ENCODE measurements at regions of chr4 and their contacts with region 1.

Region 1: DNA sequence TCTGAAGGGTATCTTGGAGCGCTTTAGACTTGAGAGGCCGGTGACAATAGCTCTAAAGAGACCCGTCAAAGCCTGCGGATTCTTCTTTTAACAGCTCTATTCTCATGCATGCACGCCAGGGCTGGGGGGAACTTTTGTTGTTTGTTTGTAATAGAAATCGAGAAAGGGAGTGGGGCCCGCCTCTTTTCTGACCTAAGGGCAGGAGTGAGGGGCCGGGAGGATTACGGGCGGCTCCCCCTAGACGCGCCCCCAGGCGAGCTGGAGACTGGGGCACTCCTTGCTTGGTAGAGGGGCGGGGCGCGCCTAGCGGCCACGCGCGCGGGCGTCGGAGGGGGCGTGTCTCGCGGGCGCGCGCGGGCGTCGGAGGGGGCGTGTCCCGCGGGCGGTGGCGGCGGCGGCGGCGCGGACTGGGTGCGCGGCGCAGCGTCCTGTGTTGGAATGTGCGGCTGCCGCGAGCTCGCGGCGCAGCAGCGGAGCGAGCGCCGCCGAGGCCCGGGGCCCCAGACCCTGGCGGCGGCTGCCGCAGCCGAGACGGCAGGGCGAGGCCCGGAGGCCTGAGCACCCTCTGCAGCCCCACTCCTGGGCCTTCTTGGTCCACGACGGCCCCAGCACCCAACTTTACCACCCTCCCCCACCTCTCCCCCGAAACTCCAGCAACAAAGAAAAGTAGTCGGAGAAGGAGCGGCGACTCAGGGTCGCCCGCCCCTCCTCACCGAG is at the start of gene REST:
- DNase-seq: peak; percentile 92
- ATAC-seq: peak; percentile 57
- H3K4me3 Mint-ChIP-seq: peak within 1 kb of the TSS; percentile 84
- H3K27ac Mint-ChIP-seq: peak within 1 kb of the TSS; percentile 78
- H3K4me1 Mint-ChIP-seq: peaks cover 35% of the 10 kb centered on the region
- H3K27me3 Mint-ChIP-seq: peaks cover 3% of the 10 kb centered on the region
- total RNA-seq, gene REST: 52.2 to 56.7 TPM

Region 2: DNA sequence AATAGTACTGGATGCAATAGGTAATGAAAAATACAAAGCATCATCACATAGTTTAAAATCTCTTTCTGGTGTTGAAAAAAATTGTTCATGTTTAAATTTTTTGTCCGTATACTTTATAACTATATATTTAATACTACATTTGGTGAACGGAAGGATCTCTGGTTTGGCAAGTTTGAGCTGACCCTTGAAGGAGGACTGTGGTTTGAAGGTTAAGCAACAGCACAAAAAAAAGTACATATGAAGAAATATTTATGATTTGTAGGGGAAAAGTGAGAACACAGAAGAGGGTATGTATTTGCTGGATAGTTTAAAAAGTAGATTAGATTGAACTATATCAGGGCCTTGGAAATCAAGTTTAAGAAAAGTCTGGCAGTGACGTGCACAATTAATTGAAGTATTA is 427.0 kb before region 1 on chr4:
- POLR2A ChIA-PET with region 1: interaction called, 10 read pairs
- DNase-seq: no peak
- ATAC-seq: no peak
- H3K4me3 Mint-ChIP-seq: no peak overlapping the region
- H3K27ac Mint-ChIP-seq: no peak overlapping the region
- H3K4me1 Mint-ChIP-seq: no peaks in the 10 kb centered on the region
- H3K27me3 Mint-ChIP-seq: no peaks in the 10 kb centered on the region

Region 3: DNA sequence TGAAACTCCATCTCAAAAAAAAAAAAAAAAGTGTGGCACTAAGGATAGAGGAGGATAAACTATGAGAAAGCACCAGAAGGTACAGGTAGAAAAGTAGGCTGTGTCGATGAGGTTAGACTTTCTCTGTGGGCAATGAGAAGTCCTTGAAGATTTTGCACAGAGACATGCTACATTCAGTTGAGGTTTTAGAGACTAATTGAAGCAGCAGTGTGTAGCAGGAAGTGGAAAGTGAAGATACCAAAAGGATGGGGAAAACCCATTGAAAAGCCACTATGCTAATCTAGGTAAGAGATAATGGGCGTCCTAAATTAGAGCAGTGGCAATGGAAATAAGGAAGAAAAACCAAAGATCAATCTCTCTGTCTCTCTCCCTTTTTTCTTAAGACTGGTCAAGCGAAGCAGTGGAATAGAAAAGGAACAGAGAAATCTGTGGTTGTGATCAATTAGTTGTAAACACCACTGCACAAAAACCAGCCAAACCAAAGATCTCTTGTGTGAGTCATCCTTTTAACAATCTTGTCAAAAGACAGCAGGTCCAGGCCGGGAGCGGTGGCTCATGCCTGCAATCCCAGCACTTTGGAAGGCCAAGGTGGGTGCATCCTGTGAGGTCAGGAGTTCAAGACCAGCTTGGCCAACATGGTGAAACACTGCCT is 89.7 kb before region 1 on chr4:
- POLR2A ChIA-PET with region 1: no interaction called
- DNase-seq: peak; percentile 45
- ATAC-seq: peak; percentile 86
- H3K4me3 Mint-ChIP-seq: peak overlapping the region; percentile 64
- H3K27ac Mint-ChIP-seq: peak overlapping the region; percentile 97
- H3K4me1 Mint-ChIP-seq: peaks cover 32% of the 10 kb centered on the region
- H3K27me3 Mint-ChIP-seq: peaks cover 15% of the 10 kb centered on the region

Region 4: GRCh38 chr4:56844802-56845580 is 62.7 kb before region 1 on chr4:
- POLR2A ChIA-PET with region 1: no interaction called
- DNase-seq: no peak
- ATAC-seq: no peak
- H3K4me3 Mint-ChIP-seq: no peak overlapping the region
- H3K27ac Mint-ChIP-seq: no peak overlapping the region
- H3K4me1 Mint-ChIP-seq: no peaks in the 10 kb centered on the region
- H3K27me3 Mint-ChIP-seq: no peaks in the 10 kb centered on the region